OCI-LY7 (cell line): ENCODE measurements at regions of chr1 and their contacts with region 1.

Region 1: DNA sequence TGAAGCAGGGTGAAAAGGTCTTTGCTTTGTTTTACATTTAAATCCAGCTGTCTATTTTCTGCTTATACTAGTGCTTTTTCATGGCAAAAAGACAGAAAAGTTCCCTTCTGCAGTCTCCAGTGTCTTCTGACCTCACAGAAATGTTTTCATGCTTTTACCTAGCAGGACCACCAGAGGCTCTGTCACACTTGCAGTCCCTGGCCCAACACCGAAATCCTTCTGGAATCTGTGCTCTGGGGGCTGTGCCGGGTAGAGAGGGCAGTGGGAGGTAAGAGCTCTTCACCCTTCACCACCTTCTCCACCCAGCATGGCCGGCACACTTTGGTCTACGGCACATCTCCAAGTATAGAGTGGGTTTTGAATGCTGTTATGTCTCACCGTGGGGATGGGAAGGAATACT is 20.8 kb downstream of the GNAT2 start:
- DNase-seq: no peak
- H3K4me3 ChIP-seq: no peak overlapping the region
- H3K27ac ChIP-seq: no peak overlapping the region
- H3K4me1 ChIP-seq: no peaks in the 10 kb centered on the region
- CTCF ChIP-seq: peak; percentile 54

Region 2: DNA sequence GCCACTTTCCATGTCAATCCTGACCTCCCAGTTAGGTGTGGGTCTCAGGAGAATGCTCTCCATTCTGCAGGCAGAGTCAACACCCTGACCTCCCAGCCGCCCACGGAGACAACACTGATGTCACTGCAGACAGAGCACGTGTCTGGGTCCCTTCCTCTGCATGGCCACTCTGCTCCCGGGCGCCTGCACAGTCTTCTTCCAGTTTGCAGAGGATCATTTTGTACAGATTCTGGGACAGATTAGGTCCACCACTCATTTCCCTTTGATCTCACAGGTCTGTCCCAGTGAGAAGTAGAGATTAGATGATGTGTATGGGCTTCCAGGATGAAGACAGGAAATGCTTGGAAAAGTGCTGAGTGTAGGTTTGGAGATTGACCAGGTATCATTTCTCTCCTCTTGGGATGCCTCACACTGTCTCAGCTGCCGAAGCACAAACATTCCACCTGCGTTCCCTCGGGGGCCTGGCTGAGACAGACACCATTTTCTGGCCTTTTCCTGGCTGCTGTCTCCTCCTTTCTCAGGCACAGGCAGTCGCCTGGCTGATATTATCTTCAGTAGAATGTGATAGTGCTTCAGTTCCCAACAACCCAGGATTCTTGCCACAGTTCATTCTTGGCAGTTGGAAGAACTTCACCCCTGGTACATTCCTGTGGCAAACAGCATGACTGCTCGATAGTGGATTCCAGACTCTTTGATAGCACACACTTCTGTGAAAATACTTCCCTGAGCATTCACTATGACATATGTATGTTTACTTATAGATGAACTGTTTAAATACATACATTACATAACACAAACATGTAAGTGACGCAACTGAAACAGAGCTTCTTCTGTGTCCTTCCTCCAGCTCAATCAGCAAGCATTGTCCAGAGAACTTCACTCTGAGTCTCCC is 299.7 kb before region 1 on chr1:
- CTCF ChIA-PET with region 1: no interaction called
- POLR2A ChIA-PET with region 1: no interaction called
- intact Hi-C with region 1: no loop called
- DNase-seq: no peak
- H3K4me3 ChIP-seq: no peak overlapping the region
- H3K27ac ChIP-seq: no peak overlapping the region
- H3K4me1 ChIP-seq: peaks cover 17% of the 10 kb centered on the region
- CTCF ChIP-seq: no peak

Region 3: DNA sequence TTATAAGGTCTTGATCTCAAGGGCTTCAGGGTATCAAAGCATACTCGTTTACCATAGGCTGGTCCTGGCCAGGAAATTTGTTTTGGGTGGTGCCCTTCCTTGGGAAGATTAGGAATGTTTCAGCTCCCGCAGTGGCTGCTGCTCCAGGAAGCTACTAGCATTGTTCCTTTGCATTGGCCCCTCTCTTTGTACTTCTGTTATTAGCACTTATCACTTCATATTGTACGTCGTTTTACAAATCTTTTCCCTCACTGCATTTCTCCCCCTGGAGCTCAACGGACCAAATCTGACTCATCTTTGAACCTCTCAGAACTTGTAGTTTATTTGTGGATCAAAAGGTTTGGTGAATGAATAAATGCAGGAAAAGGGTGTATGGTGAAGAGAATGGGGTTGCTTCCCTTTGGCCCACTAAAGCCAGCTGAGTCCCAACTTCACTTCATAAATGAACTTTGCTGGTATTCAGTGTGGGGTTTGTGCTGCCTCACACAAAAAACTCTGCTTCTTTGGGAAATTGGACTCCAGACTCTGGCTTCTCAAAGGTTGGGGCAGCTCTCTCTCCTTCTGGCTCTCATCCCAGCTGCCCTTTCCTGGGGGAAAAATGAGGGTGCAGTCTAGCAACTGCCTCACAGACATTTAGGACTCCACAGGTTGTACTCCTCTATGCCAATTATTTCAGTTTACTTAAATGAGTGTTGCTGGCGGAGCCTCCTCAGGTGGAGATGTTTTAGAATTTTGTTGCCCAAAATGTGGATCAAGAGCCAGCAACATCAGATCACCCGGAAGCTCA is 14.9 kb after region 1 on chr1:
- CTCF ChIA-PET with region 1: interaction called, 4 read pairs
- POLR2A ChIA-PET with region 1: interaction called, 10 read pairs
- intact Hi-C with region 1: no loop called
- DNase-seq: no peak
- H3K4me3 ChIP-seq: no peak overlapping the region
- H3K27ac ChIP-seq: no peak overlapping the region
- H3K4me1 ChIP-seq: peaks cover 13% of the 10 kb centered on the region
- CTCF ChIP-seq: no peak

Region 4: DNA sequence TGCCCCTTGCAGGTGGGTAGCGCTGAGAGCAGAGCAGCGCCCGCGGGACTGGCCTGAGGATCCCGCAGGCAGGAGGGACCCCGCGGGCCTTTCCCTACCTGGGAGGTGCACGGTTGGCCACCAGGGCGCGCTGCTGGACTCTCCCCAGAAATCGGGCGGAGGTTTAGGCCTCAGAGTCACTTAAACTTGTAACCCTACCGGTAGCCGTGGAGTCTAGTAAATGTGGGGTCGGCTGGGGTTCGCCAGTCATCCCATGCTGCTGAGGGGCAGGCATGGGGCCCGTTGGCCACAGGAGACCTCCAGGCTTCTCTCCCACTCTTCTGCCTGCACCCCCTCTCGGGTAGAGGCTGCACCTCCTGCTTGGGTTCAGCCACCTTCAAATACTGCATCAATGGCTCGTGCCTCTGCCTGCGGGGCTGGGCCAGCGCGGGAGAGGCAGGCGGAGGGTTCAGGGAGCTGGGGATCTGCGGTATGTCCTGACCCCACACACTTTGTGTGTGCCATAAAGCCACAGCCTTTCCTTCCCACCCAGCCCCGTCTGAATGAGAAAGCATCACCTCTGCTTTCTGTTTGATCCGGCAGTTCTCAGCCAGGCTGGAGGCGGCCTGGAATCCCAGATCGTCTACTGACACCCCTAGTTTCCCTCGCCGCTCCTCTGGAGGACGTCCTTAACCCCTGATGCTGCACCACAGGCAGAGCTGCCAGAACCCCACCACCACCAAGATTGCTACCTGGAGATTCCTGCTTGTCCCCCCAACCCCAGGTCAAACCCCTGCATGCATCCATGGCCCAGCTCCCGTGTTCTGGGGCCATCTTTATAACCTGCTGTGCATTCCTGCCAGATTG is 45.0 kb after region 1 on chr1:
- CTCF ChIA-PET with region 1: no interaction called
- POLR2A ChIA-PET with region 1: no interaction called
- intact Hi-C with region 1: no loop called
- DNase-seq: peak; percentile 85
- H3K4me3 ChIP-seq: no peak overlapping the region
- H3K27ac ChIP-seq: no peak overlapping the region
- H3K4me1 ChIP-seq: no peaks in the 10 kb centered on the region
- CTCF ChIP-seq: peak; percentile 89

Region 5: GRCh38 chr1:110048923-110049601 is 450.4 kb after region 1 on chr1:
- CTCF ChIA-PET with region 1: no interaction called
- POLR2A ChIA-PET with region 1: no interaction called
- intact Hi-C with region 1: no loop called
- DNase-seq: no peak
- H3K4me3 ChIP-seq: no peak overlapping the region
- H3K27ac ChIP-seq: no peak overlapping the region
- H3K4me1 ChIP-seq: no peaks in the 10 kb centered on the region
- CTCF ChIP-seq: no peak